CD8-positive, alpha-beta memory T cell (primary cell): ENCODE measurements at regions of chr10 and their contacts with region 1.

Region 1: GRCh38 chr10:96089670-96090462 is 40.2 kb upstream of the ZNF518A start:
- DNase-seq: peak; percentile 82 to 96 (median 92)
- H3K4me3 ChIP-seq: peak overlapping the region; percentile 95
- H3K4me3 Mint-ChIP-seq: peak overlapping the region; percentile 91 to 97 (median 96)
- H3K27ac ChIP-seq: peak overlapping the region; percentile 98
- H3K27ac Mint-ChIP-seq: peak overlapping the region; percentile 97 to 99 (median 99)
- H3K4me1 ChIP-seq: peaks cover 12% of the 10 kb centered on the region
- H3K4me1 Mint-ChIP-seq: peaks cover 12 to 16% (median 15%) of the 10 kb centered on the region in 3 donors
- H3K27me3 ChIP-seq: peaks cover 3% of the 10 kb centered on the region
- H3K27me3 Mint-ChIP-seq: peaks cover 32 to 34% of the 10 kb centered on the region in 2 donors

Region 2: GRCh38 chr10:96043033-96043932 is 46.6 kb before region 1 on chr10 and contains the start of gene CCNJ:
- CTCF ChIA-PET with region 1: no interaction called
- POLR2A ChIA-PET with region 1: interaction called, 14 read pairs
- DNase-seq: peak; percentile 75 to 88 (median 83)
- H3K4me3 ChIP-seq: peak within 1 kb of the TSS; percentile 72
- H3K4me3 Mint-ChIP-seq: peak within 1 kb of the TSS; percentile 87 to 98 (median 92)
- H3K27ac ChIP-seq: peak within 1 kb of the TSS; percentile 67
- H3K27ac Mint-ChIP-seq: peak within 1 kb of the TSS; percentile 88 to 94 (median 92)
- H3K4me1 ChIP-seq: peaks cover 14% of the 10 kb centered on the region
- H3K4me1 Mint-ChIP-seq: peaks cover 42 to 53% (median 50%) of the 10 kb centered on the region in 3 donors
- H3K27me3 ChIP-seq: peaks cover 4% of the 10 kb centered on the region
- H3K27me3 Mint-ChIP-seq: peaks cover 5 to 12% of the 10 kb centered on the region in 2 donors
- total RNA-seq, gene CCNJ: 9.4 to 10.0 TPM

Region 3: GRCh38 chr10:96073722-96074121 is 16.1 kb before region 1 on chr10:
- CTCF ChIA-PET with region 1: no interaction called
- POLR2A ChIA-PET with region 1: no interaction called
- DNase-seq: no peak
- H3K4me3 ChIP-seq: no peak overlapping the region
- H3K4me3 Mint-ChIP-seq: no peak overlapping the region
- H3K27ac ChIP-seq: no peak overlapping the region
- H3K27ac Mint-ChIP-seq: peak overlapping the region in 3 of 8 donors; percentile 1 to 22 (median 10)
- H3K4me1 ChIP-seq: no peaks in the 10 kb centered on the region
- H3K4me1 Mint-ChIP-seq: peaks cover 7 to 8% (median 7%) of the 10 kb centered on the region in 3 donors
- H3K27me3 ChIP-seq: no peaks in the 10 kb centered on the region
- H3K27me3 Mint-ChIP-seq: peaks cover 0 to 1% of the 10 kb centered on the region in 2 donors

Region 4: DNA sequence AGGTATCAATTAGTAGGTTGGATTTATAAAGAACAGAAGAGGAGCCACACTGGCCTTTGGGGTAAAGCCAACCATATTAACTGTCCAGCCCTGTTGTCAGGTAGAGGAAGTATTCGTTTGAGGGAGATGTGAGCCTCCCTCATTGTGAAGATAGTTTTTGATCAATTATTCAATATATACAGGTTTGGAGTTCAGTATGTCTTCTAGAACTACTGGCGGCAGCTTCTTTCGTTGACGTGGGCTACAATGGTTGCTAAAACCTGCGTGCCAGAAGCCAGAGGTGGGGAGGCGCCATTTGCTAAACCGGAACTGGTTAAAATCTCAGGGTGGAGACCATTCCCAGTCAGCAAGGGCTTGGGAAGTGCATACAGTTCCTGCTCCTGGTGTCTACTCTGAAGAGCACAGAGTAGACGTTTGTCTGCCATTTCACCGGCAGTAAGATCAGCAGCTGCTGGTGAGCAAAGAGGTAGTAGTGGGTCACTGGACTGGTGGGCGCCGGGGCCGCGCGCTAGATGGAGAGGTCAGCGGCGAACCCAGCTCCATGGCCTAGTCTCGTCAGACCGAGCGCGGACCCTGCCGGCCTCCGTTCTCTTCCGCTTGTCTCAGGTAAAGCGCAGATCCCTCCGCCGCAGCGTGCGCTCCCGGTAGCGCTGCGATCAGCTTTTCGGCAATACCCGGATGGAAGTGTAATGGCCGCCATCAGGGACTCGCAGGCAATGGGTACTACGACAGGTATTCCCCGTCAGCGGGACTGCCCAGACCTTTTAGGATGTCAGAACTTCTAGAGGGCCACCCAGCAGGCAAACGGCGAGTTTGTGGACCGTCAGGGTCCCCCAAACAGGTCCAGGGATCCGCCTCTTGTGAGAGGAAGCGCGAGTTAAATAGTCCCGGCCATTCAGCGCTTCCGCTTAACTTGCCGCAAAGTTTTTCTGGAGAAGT is 39.8 kb after region 1 on chr10 and contains the start of gene ZNF518A:
- CTCF ChIA-PET with region 1: interaction called, 29 read pairs
- POLR2A ChIA-PET with region 1: interaction called, 112 read pairs
- DNase-seq: peak; percentile 79 to 94 (median 92)
- H3K4me3 ChIP-seq: peak within 1 kb of the TSS; percentile 80
- H3K4me3 Mint-ChIP-seq: peak within 1 kb of the TSS; percentile 84 to 99 (median 95)
- H3K27ac ChIP-seq: peak within 1 kb of the TSS; percentile 95
- H3K27ac Mint-ChIP-seq: peak within 1 kb of the TSS; percentile 97 to 99 (median 99)
- H3K4me1 ChIP-seq: peaks cover 16% of the 10 kb centered on the region
- H3K4me1 Mint-ChIP-seq: peaks cover 22 to 33% (median 28%) of the 10 kb centered on the region in 3 donors
- H3K27me3 ChIP-seq: peaks cover 16% of the 10 kb centered on the region
- H3K27me3 Mint-ChIP-seq: peaks cover 35 to 39% of the 10 kb centered on the region in 2 donors
- total RNA-seq, gene ZNF518A: 15.0 to 15.7 TPM

Region 5: GRCh38 chr10:96339957-96340904 is 250.4 kb after region 1 on chr10:
- CTCF ChIA-PET with region 1: no interaction called
- POLR2A ChIA-PET with region 1: no interaction called
- DNase-seq: peak in 4 of 5 donors; percentile 14 to 62 (median 33)
- H3K4me3 ChIP-seq: no peak overlapping the region
- H3K4me3 Mint-ChIP-seq: no peak overlapping the region
- H3K27ac ChIP-seq: no peak overlapping the region
- H3K27ac Mint-ChIP-seq: no peak overlapping the region
- H3K4me1 ChIP-seq: no peaks in the 10 kb centered on the region
- H3K4me1 Mint-ChIP-seq: no peaks in the 10 kb centered on the region
- H3K27me3 ChIP-seq: no peaks in the 10 kb centered on the region
- H3K27me3 Mint-ChIP-seq: peaks cover 7 to 17% of the 10 kb centered on the region in 2 donors